Natural killer cell (primary cell): ENCODE measurements at regions of chr20 and their contacts with region 1.

Region 1: DNA sequence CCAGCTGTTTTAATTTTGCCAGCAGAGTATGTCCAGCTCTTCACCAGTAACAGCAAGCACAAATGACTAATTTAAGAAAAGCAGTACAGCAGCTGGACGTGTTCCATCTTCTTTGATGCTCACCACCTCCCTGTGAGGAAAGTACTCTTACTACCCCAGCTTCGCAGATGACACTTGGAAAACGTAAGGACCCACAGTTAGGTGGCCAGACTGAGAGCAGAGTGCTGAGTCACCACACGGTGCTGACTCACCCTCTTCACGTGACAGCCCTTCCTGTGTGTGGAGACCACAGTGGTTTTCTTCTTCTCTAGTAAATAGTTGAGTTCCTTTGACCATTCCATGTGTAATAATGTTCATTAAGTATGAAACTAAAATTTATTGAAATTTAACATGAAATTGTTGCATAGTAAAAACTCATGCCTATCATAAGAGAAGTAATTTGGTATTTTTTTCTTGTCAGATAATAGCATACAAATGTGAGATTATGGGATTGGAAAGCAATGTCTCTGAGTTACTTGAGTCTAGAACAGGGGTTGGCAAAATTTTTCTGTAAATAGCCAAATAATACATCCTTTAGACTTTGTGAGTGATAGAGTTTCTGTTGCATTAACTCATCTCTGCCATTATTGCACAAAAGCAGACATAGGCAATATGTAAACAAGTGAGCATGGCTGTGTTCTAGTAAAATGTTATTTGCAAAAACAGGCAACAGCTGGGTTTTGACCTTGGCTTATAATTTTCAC is 76.6 kb downstream of the SLX4IP start:
- DNase-seq: peak; percentile 75 to 76
- ATAC-seq: peak; percentile 94 to 99 (median 96)
- H3K4me3 ChIP-seq: no peak overlapping the region
- H3K4me3 Mint-ChIP-seq: peak overlapping the region; percentile 70
- H3K27ac ChIP-seq: no peak overlapping the region
- H3K27ac Mint-ChIP-seq: peak overlapping the region; percentile 82 to 84
- H3K4me1 ChIP-seq: peaks cover 15% of the 10 kb centered on the region
- H3K4me1 Mint-ChIP-seq: peaks cover 43 to 53% of the 10 kb centered on the region in 2 donors
- H3K27me3 ChIP-seq: no peaks in the 10 kb centered on the region
- H3K27me3 Mint-ChIP-seq: no peaks in the 10 kb centered on the region
- CTCF ChIP-seq: no peak

Region 2: GRCh38 chr20:10350188-10350842 is 161.4 kb before region 1 on chr20:
- intact Hi-C with region 1: loop called (anchors 2 kb)
- DNase-seq: no peak
- ATAC-seq: no peak
- H3K4me3 ChIP-seq: no peak overlapping the region
- H3K4me3 Mint-ChIP-seq: peak overlapping the region; percentile 84
- H3K27ac ChIP-seq: peak overlapping the region; percentile 95
- H3K27ac Mint-ChIP-seq: peak overlapping the region; percentile 92 to 94
- H3K4me1 ChIP-seq: peaks cover 20% of the 10 kb centered on the region
- H3K4me1 Mint-ChIP-seq: peaks cover 37 to 39% of the 10 kb centered on the region in 2 donors
- H3K27me3 ChIP-seq: no peaks in the 10 kb centered on the region
- H3K27me3 Mint-ChIP-seq: no peaks in the 10 kb centered on the region
- CTCF ChIP-seq: no peak

Region 3: GRCh38 chr20:10434832-10435812 is 76.6 kb before region 1 on chr20 and contains the start of gene SLX4IP:
- intact Hi-C with region 1: loop called (anchors 5 kb)
- DNase-seq: peak; percentile 72 to 94
- ATAC-seq: peak; percentile 64 to 81 (median 66)
- H3K4me3 ChIP-seq: peak within 1 kb of the TSS; percentile 85
- H3K4me3 Mint-ChIP-seq: peak within 1 kb of the TSS; percentile 96
- H3K27ac ChIP-seq: peak within 1 kb of the TSS; percentile 90
- H3K27ac Mint-ChIP-seq: peak within 1 kb of the TSS; percentile 93 to 95
- H3K4me1 ChIP-seq: peaks cover 12% of the 10 kb centered on the region
- H3K4me1 Mint-ChIP-seq: peaks cover 34 to 47% of the 10 kb centered on the region in 2 donors
- H3K27me3 ChIP-seq: no peaks in the 10 kb centered on the region
- H3K27me3 Mint-ChIP-seq: no peaks in the 10 kb centered on the region
- CTCF ChIP-seq: no peak
- total RNA-seq, gene SLX4IP: 2.9 to 5.5 (median 5.2) TPM

Region 4: GRCh38 chr20:10501402-10501801 is 10.3 kb before region 1 on chr20:
- intact Hi-C with region 1: loop called (anchors 1 kb)
- DNase-seq: peak in 1 of 2 donors; percentile 43
- ATAC-seq: peak; percentile 56 to 71 (median 57)
- H3K4me3 ChIP-seq: peak overlapping the region; percentile 25
- H3K4me3 Mint-ChIP-seq: peak overlapping the region; percentile 92
- H3K27ac ChIP-seq: peak overlapping the region; percentile 63
- H3K27ac Mint-ChIP-seq: peak overlapping the region; percentile 83 to 95
- H3K4me1 ChIP-seq: peaks cover 14% of the 10 kb centered on the region
- H3K4me1 Mint-ChIP-seq: peaks cover 54 to 59% of the 10 kb centered on the region in 2 donors
- H3K27me3 ChIP-seq: no peaks in the 10 kb centered on the region
- H3K27me3 Mint-ChIP-seq: no peaks in the 10 kb centered on the region
- CTCF ChIP-seq: no peak

Region 5: GRCh38 chr20:10536531-10536930 is 24.9 kb after region 1 on chr20:
- intact Hi-C with region 1: no loop called
- DNase-seq: peak in 1 of 2 donors; percentile 44
- ATAC-seq: peak in 1 of 3 donors; percentile 29
- H3K4me3 ChIP-seq: no peak overlapping the region
- H3K4me3 Mint-ChIP-seq: no peak overlapping the region
- H3K27ac ChIP-seq: no peak overlapping the region
- H3K27ac Mint-ChIP-seq: no peak overlapping the region
- H3K4me1 ChIP-seq: no peaks in the 10 kb centered on the region
- H3K4me1 Mint-ChIP-seq: peaks cover 13 to 14% of the 10 kb centered on the region in 2 donors
- H3K27me3 ChIP-seq: no peaks in the 10 kb centered on the region
- H3K27me3 Mint-ChIP-seq: no peaks in the 10 kb centered on the region
- CTCF ChIP-seq: peak; percentile 37

Region 6: GRCh38 chr20:10553326-10553984 is 41.8 kb after region 1 on chr20:
- intact Hi-C with region 1: loop called (anchors 5 kb)
- DNase-seq: peak in 1 of 2 donors; percentile 52
- ATAC-seq: peak; percentile 62 to 80 (median 79)
- H3K4me3 ChIP-seq: no peak overlapping the region
- H3K4me3 Mint-ChIP-seq: no peak overlapping the region
- H3K27ac ChIP-seq: no peak overlapping the region
- H3K27ac Mint-ChIP-seq: no peak overlapping the region
- H3K4me1 ChIP-seq: peaks cover 16% of the 10 kb centered on the region
- H3K4me1 Mint-ChIP-seq: peaks cover 33 to 35% of the 10 kb centered on the region in 2 donors
- H3K27me3 ChIP-seq: no peaks in the 10 kb centered on the region
- H3K27me3 Mint-ChIP-seq: no peaks in the 10 kb centered on the region
- CTCF ChIP-seq: peak; percentile 70

Region 7: DNA sequence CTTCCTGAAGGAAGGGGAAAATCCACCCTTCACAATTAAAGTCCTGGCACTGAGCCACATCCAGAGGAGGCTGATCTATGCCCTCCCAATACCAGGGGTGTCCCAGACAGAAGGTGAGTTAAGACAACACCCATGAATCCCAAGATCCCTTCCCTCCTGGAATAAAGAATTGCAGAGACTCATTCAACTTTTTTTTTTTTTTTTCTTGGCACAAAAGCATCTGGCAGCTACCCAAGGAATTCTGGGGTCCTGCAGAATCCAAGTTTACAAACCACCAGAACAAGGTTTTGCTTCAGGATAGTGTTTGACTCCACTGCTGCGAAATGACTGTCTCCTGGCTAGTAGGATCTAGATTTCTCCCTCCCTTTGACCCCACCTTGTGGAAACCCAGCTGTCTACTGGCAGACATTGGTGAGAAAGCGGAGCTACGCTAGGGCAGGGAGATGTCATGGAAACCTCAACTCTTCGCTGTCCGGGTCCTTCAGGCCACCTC is 124.7 kb after region 1 on chr20:
- intact Hi-C with region 1: no loop called
- DNase-seq: no peak
- ATAC-seq: no peak
- H3K4me3 ChIP-seq: no peak overlapping the region
- H3K4me3 Mint-ChIP-seq: no peak overlapping the region
- H3K27ac ChIP-seq: no peak overlapping the region
- H3K27ac Mint-ChIP-seq: no peak overlapping the region
- H3K4me1 ChIP-seq: no peaks in the 10 kb centered on the region
- H3K4me1 Mint-ChIP-seq: no peaks in the 10 kb centered on the region
- H3K27me3 ChIP-seq: no peaks in the 10 kb centered on the region
- H3K27me3 Mint-ChIP-seq: peaks cover 0 to 2% of the 10 kb centered on the region in 2 donors
- CTCF ChIP-seq: no peak